ENCODE measurements at regions of chr19 and their contacts with region 1.

Region 1: GRCh38 chr19:43651758-43652545 is 12.3 kb upstream of the CADM4 start:
- DNase-seq: no peak

Region 2: DNA sequence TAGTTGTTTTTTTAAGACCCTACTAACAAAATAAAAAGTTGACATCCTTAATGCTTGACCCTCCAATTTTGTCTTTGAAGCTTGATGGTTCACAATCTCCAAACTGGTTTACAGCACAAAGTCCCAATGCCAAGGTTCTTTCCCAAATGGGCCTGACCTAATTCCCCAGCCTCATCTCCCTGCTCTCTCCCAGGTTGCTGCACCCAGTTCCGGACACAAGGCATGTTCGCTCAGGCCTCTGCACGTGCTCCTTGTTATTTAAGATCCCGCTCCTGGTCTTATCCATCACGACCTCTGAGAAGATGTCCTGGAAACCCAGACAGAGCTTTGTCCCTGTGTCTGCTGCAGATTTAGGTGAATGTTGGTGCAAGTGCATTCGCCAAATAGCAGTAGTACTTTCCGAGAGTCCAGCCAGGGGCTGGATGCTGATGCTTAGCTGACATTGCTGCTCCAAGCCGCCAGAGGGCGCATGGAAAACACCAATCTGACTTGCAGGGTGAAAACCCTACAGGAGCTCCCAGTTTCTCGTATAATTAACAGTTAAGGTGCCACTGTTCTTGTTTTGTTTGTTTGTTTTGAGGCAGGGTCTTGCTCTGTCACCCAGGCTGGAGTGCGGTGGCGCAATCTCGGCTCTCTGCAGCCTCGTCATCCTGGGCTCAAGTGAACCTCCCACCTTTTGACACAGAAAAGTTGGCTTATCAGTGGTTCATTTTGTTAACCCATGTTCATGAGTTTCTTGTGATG is 205.0 kb before region 1 on chr19:
- intact Hi-C with region 1: loop called (anchors 5 kb)
- DNase-seq: peak; percentile 90

Region 3: GRCh38 chr19:43532962-43533545 is 118.9 kb before region 1 on chr19 and contains the start of gene ZNF575:
- intact Hi-C with region 1: loop called (anchors 1 kb)
- DNase-seq: peak; percentile 95
- total RNA-seq, gene ZNF575: 1.7 TPM

Region 4: DNA sequence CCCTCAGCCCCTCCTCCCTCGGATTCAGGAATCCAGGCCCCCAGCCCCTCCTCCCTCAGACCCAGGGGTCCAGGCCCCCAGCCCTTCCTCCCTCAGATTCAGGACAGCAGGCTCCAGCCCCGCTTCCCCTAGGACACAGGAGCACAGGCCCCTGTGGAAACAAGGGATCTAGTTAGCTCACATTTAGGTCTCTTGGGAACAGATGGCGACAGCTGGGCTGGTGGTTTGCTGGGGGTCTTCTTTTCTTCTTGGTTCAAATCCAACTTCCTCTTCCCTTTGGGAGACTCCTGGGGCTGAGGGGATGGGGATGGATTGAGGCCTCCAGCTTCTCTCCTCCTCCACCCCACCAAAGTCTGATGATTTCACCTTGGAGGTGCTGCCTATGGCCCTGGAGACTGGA is 99.3 kb before region 1 on chr19:
- intact Hi-C with region 1: loop called (anchors 5 kb)
- DNase-seq: no peak

Measured in cardiac septum (tissue), 1 donor.